ENCODE measurements at regions of chr18 and their contacts with region 1.

Region 1: GRCh38 chr18:49359732-49360444 is 100.6 kb downstream of the DYM start:
- DNase-seq: no peak

Region 2: GRCh38 chr18:49399003-49399402 is 39.1 kb after region 1 on chr18:
- intact Hi-C with region 1: loop called in 1 of 2 experiments (anchors 2 kb)
- DNase-seq: no peak

Region 3: GRCh38 chr18:49500201-49500921 is 140.5 kb after region 1 on chr18:
- intact Hi-C with region 1: no loop called
- DNase-seq: peak; percentile 55

Measured in posterior vena cava (tissue), 2 donors.